Activated CD4-positive, alpha-beta memory T cell treated with anti-CD3 and anti-CD28 coated beads for 36 hours (primary cell): ENCODE measurements at regions of chr3 and their contacts with region 1.

Region 1: DNA sequence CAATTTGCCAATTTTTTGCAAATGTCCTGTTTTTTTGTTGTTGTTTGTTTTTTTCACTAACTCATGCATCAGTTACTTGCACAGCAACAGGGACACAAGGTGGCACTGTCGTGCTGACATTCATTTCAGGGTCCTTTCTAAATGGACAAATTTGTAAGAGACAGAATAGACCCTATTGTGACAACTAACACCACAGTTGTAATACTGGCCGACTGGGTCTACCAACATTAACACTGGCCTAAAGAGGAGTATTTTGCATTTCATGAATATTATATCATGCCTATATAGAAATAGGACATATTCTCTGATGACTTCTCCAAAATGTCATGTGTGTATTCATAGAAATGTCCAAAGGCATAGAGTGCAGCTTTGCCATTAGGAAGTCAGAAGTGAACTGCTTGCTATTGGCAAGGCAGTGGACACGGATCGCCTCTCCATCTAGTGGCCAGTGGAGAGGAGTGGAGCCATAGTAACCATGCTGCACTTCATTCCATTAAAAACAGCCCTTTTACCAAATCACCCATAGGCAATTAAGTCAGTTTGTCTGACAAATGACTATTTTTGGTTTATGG is 54.8 kb downstream of the ZBTB20 start:
- DNase-seq: peak; percentile 65
- H3K4me3 Mint-ChIP-seq: no peak overlapping the region
- H3K27ac Mint-ChIP-seq: no peak overlapping the region
- H3K4me1 Mint-ChIP-seq: peaks cover 13% of the 10 kb centered on the region
- H3K27me3 Mint-ChIP-seq: no peaks in the 10 kb centered on the region

Region 2: GRCh38 chr3:114827495-114827894 is 264.8 kb before region 1 on chr3:
- CTCF ChIA-PET with region 1: no interaction called
- POLR2A ChIA-PET with region 1: no interaction called
- intact Hi-C with region 1: loop called (anchors 5 kb)
- DNase-seq: no peak
- H3K4me3 Mint-ChIP-seq: no peak overlapping the region
- H3K27ac Mint-ChIP-seq: no peak overlapping the region
- H3K4me1 Mint-ChIP-seq: peaks cover 4% of the 10 kb centered on the region
- H3K27me3 Mint-ChIP-seq: no peaks in the 10 kb centered on the region

Region 3: DNA sequence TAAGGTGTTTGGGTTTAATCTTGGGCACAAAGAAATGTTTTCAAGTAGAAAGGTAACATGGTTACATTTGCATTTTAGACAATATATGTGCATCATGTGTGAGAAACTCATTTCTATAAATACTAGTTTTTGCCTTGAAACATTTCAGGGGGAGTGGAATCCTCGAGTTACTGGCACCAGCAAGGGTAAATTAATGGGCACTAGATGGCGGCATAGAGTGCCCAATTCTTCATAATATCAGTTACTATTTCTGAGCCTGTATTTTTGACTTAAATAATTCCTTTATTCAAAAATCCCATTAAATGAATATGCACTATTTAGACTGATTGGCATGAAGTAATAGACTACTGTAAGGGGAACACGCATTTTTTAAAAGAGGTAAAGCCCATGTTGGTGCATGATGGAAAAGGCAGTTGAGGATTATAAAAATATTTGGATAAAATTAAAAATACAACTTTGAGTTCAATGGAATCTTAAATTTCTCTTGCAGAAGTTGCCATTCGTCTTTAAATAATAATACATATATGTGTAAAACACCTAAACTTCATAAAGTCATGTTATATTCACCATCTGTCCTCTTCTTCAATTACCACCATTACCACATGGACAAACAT is 51.5 kb before region 1 on chr3:
- CTCF ChIA-PET with region 1: interaction called, 7 read pairs
- POLR2A ChIA-PET with region 1: no interaction called
- intact Hi-C with region 1: loop called (anchors 2 kb)
- DNase-seq: peak; percentile 34
- H3K4me3 Mint-ChIP-seq: no peak overlapping the region
- H3K27ac Mint-ChIP-seq: no peak overlapping the region
- H3K4me1 Mint-ChIP-seq: peaks cover 2% of the 10 kb centered on the region
- H3K27me3 Mint-ChIP-seq: no peaks in the 10 kb centered on the region

Region 4: GRCh38 chr3:115169808-115170207 is 77.5 kb after region 1 on chr3:
- CTCF ChIA-PET with region 1: interaction called, 72 read pairs
- POLR2A ChIA-PET with region 1: no interaction called
- intact Hi-C with region 1: loop called (anchors 1 kb)
- DNase-seq: no peak
- H3K4me3 Mint-ChIP-seq: no peak overlapping the region
- H3K27ac Mint-ChIP-seq: no peak overlapping the region
- H3K4me1 Mint-ChIP-seq: peaks cover 12% of the 10 kb centered on the region
- H3K27me3 Mint-ChIP-seq: no peaks in the 10 kb centered on the region

Region 5: DNA sequence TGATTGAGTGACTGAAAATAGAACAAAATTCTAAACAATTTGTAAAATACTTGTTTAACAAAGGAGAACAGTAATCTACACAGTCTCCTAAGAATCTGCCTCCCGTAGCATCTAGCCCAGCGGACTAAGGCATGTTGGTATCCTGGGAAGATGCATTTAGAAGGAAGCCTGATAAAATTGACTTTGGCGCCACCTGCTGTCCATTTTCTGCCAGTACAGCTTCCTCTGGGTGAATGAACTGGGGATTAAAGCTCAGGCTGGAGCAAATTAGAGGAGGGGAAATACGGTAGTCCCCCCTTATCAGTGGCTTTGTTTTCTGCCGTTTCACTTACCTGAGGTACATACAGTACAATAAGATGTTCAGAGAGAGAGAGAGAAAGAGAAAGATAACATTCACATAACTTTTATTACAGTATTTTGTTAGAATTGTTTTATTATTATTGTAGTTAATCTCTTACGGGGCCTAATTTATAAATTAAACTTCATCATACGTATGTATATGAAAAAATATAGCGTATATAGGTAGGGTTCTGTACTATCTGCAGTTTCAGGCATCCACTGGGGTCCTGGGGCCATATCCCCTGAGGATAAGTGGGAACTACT is 722.6 kb after region 1 on chr3:
- CTCF ChIA-PET with region 1: interaction called, 5 read pairs
- POLR2A ChIA-PET with region 1: no interaction called
- intact Hi-C with region 1: loop called (anchors 2 kb)
- DNase-seq: peak; percentile 78
- H3K4me3 Mint-ChIP-seq: no peak overlapping the region
- H3K27ac Mint-ChIP-seq: no peak overlapping the region
- H3K4me1 Mint-ChIP-seq: no peaks in the 10 kb centered on the region
- H3K27me3 Mint-ChIP-seq: peaks cover 2% of the 10 kb centered on the region